Naive thymus-derived CD4-positive, alpha-beta T cell (primary cell): ENCODE measurements at regions of chr11 and their contacts with region 1.

Region 1: DNA sequence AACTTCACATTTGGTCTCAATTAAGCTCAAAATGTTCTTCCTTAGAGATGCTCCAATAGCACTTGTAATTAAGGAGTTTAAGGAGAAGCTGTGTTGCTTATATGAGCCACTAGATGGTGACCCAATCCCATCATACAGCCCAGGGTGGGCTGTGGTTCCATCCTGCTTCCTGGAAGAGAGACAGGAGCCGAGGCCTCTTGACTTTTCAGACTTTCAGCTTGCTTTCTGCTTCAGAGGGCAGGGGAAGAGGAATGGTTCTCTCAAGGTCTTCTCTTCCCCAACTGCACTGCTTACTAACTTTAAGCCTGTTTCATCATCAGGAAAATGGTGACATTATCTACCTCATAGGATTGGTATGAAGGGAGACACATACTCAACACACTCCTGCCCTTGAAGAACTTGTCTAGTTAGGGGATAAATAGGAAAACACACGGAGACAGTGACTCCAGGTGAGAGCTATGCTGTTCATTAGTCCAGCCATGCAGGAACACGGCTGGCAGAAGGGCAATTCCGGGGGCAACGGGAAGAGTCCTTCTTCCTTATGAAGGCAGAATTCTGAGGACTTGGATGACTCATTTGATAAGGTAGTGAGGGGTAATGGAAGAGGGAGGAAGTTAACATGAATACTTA is 20.1 kb downstream of the TMEM218 start:
- DNase-seq: peak in 2 of 9 donors; percentile 3 to 15
- ATAC-seq: peak; percentile 51
- H3K4me3 ChIP-seq: no peak overlapping the region
- H3K4me3 Mint-ChIP-seq: no peak overlapping the region
- H3K27ac ChIP-seq: no peak overlapping the region
- H3K27ac Mint-ChIP-seq: peak overlapping the region in 1 of 9 donors; percentile 21
- H3K4me1 ChIP-seq: no peaks in the 10 kb centered on the region
- H3K4me1 Mint-ChIP-seq: peaks cover 0 to 6% (median 0%) of the 10 kb centered on the region in 7 donors
- H3K27me3 ChIP-seq: no peaks in the 10 kb centered on the region
- H3K27me3 Mint-ChIP-seq: no peaks in the 10 kb centered on the region

Region 2: GRCh38 chr11:125123947-125124617 is 32.7 kb after region 1 on chr11:
- CTCF ChIA-PET with region 1: interaction called, 12 read pairs
- POLR2A ChIA-PET with region 1: no interaction called
- intact Hi-C with region 1: loop called in 1 of 2 experiments (anchors 1 kb)
- DNase-seq: peak in 5 of 9 donors; percentile 16 to 29 (median 20)
- ATAC-seq: peak; percentile 78
- H3K4me3 ChIP-seq: no peak overlapping the region
- H3K4me3 Mint-ChIP-seq: no peak overlapping the region
- H3K27ac ChIP-seq: no peak overlapping the region
- H3K27ac Mint-ChIP-seq: no peak overlapping the region
- H3K4me1 ChIP-seq: no peaks in the 10 kb centered on the region
- H3K4me1 Mint-ChIP-seq: peaks cover 0 to 8% (median 0%) of the 10 kb centered on the region in 7 donors
- H3K27me3 ChIP-seq: peaks cover 0 to 7% of the 10 kb centered on the region in 2 donors
- H3K27me3 Mint-ChIP-seq: peaks cover 26 to 45% (median 43%) of the 10 kb centered on the region in 5 donors

Region 3: GRCh38 chr11:125141686-125142535 is 50.5 kb after region 1 on chr11:
- CTCF ChIA-PET with region 1: interaction called, 16 read pairs
- POLR2A ChIA-PET with region 1: no interaction called
- intact Hi-C with region 1: loop called (anchors 1 to 2 kb)
- DNase-seq: peak; percentile 21 to 73 (median 48)
- ATAC-seq: peak; percentile 95
- H3K4me3 ChIP-seq: no peak overlapping the region
- H3K4me3 Mint-ChIP-seq: peak overlapping the region in 3 of 10 donors; percentile 10 to 49 (median 20)
- H3K27ac ChIP-seq: no peak overlapping the region
- H3K27ac Mint-ChIP-seq: no peak overlapping the region
- H3K4me1 ChIP-seq: no peaks in the 10 kb centered on the region
- H3K4me1 Mint-ChIP-seq: peaks cover 0 to 6% (median 5%) of the 10 kb centered on the region in 7 donors
- H3K27me3 ChIP-seq: peaks cover 0 to 5% of the 10 kb centered on the region in 2 donors
- H3K27me3 Mint-ChIP-seq: peaks cover 15 to 47% (median 27%) of the 10 kb centered on the region in 5 donors

Region 4: DNA sequence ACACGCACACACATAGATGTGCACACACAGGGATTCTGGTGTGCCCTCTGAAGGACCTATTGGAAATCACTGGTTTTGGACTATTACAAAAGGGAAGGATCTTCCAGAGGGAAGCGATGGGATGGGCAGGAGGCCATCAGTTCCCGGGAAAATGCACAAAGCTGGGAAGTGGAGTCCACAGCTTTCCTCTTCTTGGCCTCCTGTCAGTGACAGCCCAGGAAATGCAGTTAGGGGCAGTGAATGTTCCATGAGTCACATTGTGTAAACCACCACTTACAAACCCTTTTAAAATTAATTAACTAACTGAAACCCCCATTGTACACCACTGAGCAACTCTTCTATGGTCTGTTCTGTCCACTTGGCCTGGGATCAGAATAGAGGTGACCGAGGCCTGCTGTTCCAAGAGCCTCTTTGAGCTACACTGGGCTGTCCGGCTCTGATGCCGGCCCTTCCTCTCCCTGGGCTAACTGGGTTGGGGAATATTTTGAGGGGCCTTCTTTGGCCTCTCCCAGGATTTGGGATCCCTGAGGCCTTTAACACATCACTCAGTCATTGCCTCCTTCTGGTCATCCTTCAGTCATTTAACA is 267.0 kb after region 1 on chr11:
- CTCF ChIA-PET with region 1: no interaction called
- POLR2A ChIA-PET with region 1: no interaction called
- intact Hi-C with region 1: loop called in 1 of 2 experiments (anchors 5 kb)
- DNase-seq: no peak
- ATAC-seq: no peak
- H3K4me3 ChIP-seq: no peak overlapping the region
- H3K4me3 Mint-ChIP-seq: no peak overlapping the region
- H3K27ac ChIP-seq: no peak overlapping the region
- H3K27ac Mint-ChIP-seq: no peak overlapping the region
- H3K4me1 ChIP-seq: no peaks in the 10 kb centered on the region
- H3K4me1 Mint-ChIP-seq: peaks cover 0 to 6% (median 0%) of the 10 kb centered on the region in 7 donors
- H3K27me3 ChIP-seq: no peaks in the 10 kb centered on the region
- H3K27me3 Mint-ChIP-seq: peaks cover 0 to 4% (median 0%) of the 10 kb centered on the region in 5 donors